Heart left ventricle (tissue), 16 donors: ENCODE measurements at regions of chr4 and their contacts with region 1.

Region 1: GRCh38 chr4:175671491-175671934 is 140.6 kb downstream of the GPM6A start:
- DNase-seq: no peak
- ATAC-seq: no peak
- H3K4me3 ChIP-seq: peak overlapping the region in 2 of 12 donors; percentile 10
- H3K27ac ChIP-seq: no peak overlapping the region
- H3K4me1 ChIP-seq: no peaks in the 10 kb centered on the region
- H3K27me3 ChIP-seq: no peaks in the 10 kb centered on the region
- CTCF ChIP-seq: no peak
- POLR2A ChIP-seq: no peak

Region 2: GRCh38 chr4:175542786-175543185 is 128.7 kb before region 1 on chr4:
- intact Hi-C with region 1: no loop called
- DNase-seq: no peak
- ATAC-seq: peak in 2 of 4 donors; percentile 56 to 68
- H3K4me3 ChIP-seq: no peak overlapping the region
- H3K27ac ChIP-seq: no peak overlapping the region
- H3K4me1 ChIP-seq: no peaks in the 10 kb centered on the region
- H3K27me3 ChIP-seq: no peaks in the 10 kb centered on the region
- CTCF ChIP-seq: no peak
- POLR2A ChIP-seq: no peak

Region 3: DNA sequence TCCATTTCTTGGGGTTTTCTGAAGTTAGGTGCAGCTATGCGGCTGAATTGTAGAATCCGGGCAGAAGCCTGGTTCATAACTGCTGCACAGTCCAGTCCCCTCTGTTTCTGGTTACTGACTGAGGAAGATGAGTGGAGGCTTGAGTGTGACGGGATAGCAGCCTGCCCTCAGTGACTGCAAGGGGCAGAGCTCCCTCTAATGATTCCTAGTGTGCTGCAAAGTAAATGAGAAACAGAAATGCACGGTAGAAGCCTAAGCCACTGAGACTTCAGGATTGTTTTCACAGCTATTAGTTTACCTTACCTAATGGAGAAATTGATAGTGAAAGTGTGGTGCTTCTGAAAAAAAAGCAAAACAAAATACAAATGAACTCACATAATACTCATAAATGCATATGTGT is 48.6 kb before region 1 on chr4:
- intact Hi-C with region 1: loop called in 1 of 10 experiments (anchors 2 kb)
- DNase-seq: no peak
- ATAC-seq: peak in 1 of 4 donors; percentile 60
- H3K4me3 ChIP-seq: no peak overlapping the region
- H3K27ac ChIP-seq: no peak overlapping the region
- H3K4me1 ChIP-seq: no peaks in the 10 kb centered on the region
- H3K27me3 ChIP-seq: no peaks in the 10 kb centered on the region
- CTCF ChIP-seq: no peak
- POLR2A ChIP-seq: no peak

Region 4: GRCh38 chr4:175720067-175720466 is 48.6 kb after region 1 on chr4:
- intact Hi-C with region 1: no loop called
- DNase-seq: no peak
- ATAC-seq: no peak
- H3K4me3 ChIP-seq: no peak overlapping the region
- H3K27ac ChIP-seq: no peak overlapping the region
- H3K4me1 ChIP-seq: no peaks in the 10 kb centered on the region
- H3K27me3 ChIP-seq: no peaks in the 10 kb centered on the region
- CTCF ChIP-seq: no peak
- POLR2A ChIP-seq: no peak